Activated T-helper 1 cell treated with anti-CD3 and anti-CD28 coated beads, Interleukin-12 subunit alpha, Interleukin-12 subunit beta, Interleukin-2, Interleukin-4 antibody, amounts not matched to agents 30 ng/mL and 10 ng/mL and 1 ng/mL, durations not matched to agents 14 hours and 24 hours and 36 hours (primary cell): ENCODE measurements at regions of chr12 and their contacts with region 1.

Region 1: GRCh38 chr12:27332407-27333301 is at the start of gene BMAL2:
- DNase-seq: peak; percentile 46
- H3K4me3 Mint-ChIP-seq: peak within 1 kb of the TSS; percentile 99
- H3K27ac Mint-ChIP-seq: peak within 1 kb of the TSS; percentile 96
- H3K4me1 Mint-ChIP-seq: peaks cover 67% of the 10 kb centered on the region
- H3K27me3 Mint-ChIP-seq: no peaks in the 10 kb centered on the region
- total RNA-seq, gene BMAL2: 57.2 and 58.0 TPM in 2 replicates

Region 2: GRCh38 chr12:26937875-26938700 is 394.6 kb before region 1 on chr12 and contains the starts of genes FGFR1OP2 and INTS13:
- intact Hi-C with region 1: loop called (anchors 1 kb)
- DNase-seq: peak; percentile 97
- H3K4me3 Mint-ChIP-seq: peak within 1 kb of the TSS; percentile 96
- H3K27ac Mint-ChIP-seq: peak within 1 kb of the TSS; percentile 96
- H3K4me1 Mint-ChIP-seq: peaks cover 82% of the 10 kb centered on the region
- H3K27me3 Mint-ChIP-seq: no peaks in the 10 kb centered on the region
- total RNA-seq, gene FGFR1OP2: 48.3 and 49.9 TPM in 2 replicates
- total RNA-seq, gene INTS13: 43.8 and 52.2 TPM in 2 replicates

Region 3: GRCh38 chr12:27237790-27238771 is 94.6 kb before region 1 on chr12:
- intact Hi-C with region 1: loop called (anchors 1 kb)
- DNase-seq: peak; percentile 19
- H3K4me3 Mint-ChIP-seq: peak overlapping the region; percentile 67
- H3K27ac Mint-ChIP-seq: peak overlapping the region; percentile 68
- H3K4me1 Mint-ChIP-seq: peaks cover 41% of the 10 kb centered on the region
- H3K27me3 Mint-ChIP-seq: peaks cover 2% of the 10 kb centered on the region

Region 4: DNA sequence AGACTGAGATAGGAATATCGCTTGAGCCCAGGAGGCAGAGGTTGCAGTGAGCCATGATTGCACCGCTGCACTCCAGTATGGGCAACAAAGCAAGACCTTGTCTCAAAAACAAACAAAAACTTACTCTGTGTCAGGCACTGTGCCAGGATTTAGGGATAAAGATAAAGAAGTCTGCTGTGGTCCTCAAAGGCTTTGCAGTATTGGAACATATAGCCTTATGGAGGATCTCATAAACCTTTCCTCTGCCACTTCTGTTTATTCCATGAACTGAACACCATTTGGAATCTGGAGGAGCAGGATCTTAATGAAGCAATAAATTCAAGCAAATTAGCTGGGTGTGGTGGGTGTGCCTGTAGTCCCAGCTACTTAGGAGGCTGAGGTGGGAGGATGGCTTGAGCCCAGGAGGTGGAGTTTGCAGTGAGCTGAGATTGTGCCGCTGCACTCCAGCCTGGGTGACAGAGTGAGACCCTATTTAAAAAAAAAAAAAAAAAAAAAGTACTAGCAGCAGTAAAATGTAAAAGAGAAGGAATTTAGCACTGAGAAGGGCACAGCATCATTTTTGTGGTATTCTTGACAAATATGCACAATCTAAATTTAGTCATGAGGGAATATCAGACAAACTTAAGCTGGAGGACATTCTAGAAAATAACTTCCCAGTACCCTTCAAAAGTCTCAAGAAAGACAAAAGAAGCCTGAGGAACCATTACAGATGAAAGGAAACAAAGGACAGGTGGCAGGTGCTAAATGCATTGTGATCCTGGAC is 27.1 kb after region 1 on chr12:
- intact Hi-C with region 1: no loop called
- DNase-seq: no peak
- H3K4me3 Mint-ChIP-seq: no peak overlapping the region
- H3K27ac Mint-ChIP-seq: no peak overlapping the region
- H3K4me1 Mint-ChIP-seq: peaks cover 6% of the 10 kb centered on the region
- H3K27me3 Mint-ChIP-seq: peaks cover 3% of the 10 kb centered on the region

Region 5: DNA sequence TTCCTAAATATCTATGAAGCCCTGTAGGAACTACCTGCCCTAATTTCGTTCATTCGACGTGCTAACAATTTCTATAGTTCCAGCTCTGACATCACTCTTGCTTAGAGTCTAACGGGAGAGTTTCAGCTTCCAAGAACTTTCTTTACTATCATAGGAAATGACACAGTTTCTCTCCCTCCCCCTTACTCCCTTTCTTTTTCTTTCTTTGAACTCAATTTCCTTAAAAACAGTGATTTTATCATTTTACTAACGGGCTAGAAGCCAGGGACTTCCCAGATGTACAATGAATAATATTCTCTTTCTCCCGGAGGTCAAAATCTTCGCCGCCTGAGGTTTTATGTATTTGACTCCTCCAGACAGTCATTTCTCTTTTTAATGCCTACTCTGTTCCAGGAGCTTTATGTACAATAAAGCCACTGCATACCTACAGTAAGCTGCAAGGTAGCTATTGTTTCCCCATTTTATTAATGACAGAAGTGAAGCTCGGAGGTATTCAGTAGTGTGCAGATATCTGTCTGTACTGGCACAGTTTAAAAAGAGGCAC is 129.6 kb after region 1 on chr12:
- intact Hi-C with region 1: loop called (anchors 1 kb)
- DNase-seq: no peak
- H3K4me3 Mint-ChIP-seq: peak overlapping the region; percentile 53
- H3K27ac Mint-ChIP-seq: peak overlapping the region; percentile 84
- H3K4me1 Mint-ChIP-seq: peaks cover 69% of the 10 kb centered on the region
- H3K27me3 Mint-ChIP-seq: no peaks in the 10 kb centered on the region

Region 6: DNA sequence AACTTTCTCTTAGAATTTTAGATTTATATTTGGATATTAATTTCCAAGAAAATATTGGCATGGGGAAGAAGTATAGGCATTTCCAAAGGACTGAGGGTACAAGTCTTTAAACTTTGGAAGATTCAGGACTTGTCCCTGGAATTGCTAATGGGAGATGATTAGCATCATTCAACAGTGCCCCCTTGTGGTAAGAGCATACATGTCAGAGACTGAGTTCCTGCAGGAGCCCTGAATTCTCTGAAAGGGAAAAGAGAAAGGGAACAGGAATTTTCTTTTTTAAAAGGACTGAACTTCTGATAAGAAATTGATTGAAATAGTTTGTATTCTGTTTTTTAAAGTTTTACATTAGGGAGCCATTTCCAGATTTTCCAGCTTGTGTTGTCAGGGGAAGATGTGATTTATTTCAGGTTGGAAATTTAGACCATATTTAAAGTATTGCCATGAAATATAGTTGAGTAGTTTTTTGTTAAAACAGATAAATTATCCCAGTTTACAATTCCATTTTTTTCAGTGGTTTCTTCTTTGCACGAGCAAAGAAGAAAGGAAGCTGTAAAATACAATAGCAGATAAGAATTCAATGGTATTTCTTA is 319.6 kb after region 1 on chr12:
- intact Hi-C with region 1: loop called (anchors 5 kb)
- DNase-seq: peak; percentile 23
- H3K4me3 Mint-ChIP-seq: no peak overlapping the region
- H3K27ac Mint-ChIP-seq: no peak overlapping the region
- H3K4me1 Mint-ChIP-seq: peaks cover 42% of the 10 kb centered on the region
- H3K27me3 Mint-ChIP-seq: no peaks in the 10 kb centered on the region